ENCODE measurements at regions of chr10 and their contacts with region 1.

Region 1: DNA sequence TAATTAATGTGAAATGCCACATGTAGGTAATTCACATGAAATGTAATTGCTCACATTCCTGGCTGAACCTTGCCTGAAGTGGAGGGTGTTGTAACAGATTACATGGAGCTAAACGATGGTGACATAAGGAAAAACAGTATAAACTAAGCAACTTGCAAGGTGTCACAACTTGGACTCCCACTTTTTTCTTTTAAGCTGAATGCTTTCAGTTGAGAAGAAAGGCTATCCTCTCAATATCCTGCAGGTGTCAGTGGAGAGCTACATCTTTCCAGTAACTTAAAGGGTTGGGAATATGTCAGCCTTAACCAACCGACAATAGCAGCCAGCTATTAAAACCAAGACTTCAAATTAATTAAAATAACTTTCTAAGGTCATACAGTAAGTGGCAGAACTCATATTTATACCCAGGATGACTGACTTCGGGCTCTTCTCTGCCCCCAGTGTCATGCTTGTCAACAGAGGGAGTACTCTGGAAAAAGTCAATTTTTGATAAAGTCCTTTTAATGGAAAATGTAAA is 33.7 kb downstream of the NRBF2 start:
- DNase-seq: peak; percentile 31
- CTCF ChIP-seq: peak; percentile 60

Region 2: DNA sequence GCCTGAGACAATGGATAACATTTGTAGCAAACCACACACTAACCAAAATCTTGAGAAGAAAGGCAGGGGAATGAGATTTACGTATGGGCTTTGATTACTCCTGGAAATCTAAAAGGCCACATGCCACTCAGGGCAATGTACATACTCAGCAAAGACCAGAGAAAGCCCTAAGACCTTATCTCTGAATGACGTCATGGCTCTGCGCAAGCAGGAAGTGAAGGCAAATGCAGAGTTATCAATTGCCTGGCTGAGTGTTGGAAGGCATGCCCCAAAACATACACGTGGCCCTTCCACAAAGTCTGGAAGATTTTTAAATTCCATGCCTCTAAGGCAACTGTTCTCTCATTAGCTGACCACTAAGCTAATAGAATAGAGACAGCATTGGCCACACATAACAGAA is 124.5 kb before region 1 on chr10:
- CTCF ChIA-PET with region 1: no interaction called
- POLR2A ChIA-PET with region 1: no interaction called
- DNase-seq: no peak
- CTCF ChIP-seq: no peak

Region 3: GRCh38 chr10:63068246-63068645 is 98.6 kb before region 1 on chr10:
- CTCF ChIA-PET with region 1: no interaction called
- POLR2A ChIA-PET with region 1: no interaction called
- DNase-seq: no peak
- CTCF ChIP-seq: no peak

Region 4: GRCh38 chr10:63140077-63140476 is 26.7 kb before region 1 on chr10:
- CTCF ChIA-PET with region 1: interaction called, 26 read pairs
- POLR2A ChIA-PET with region 1: no interaction called
- DNase-seq: no peak
- CTCF ChIP-seq: no peak

Region 5: GRCh38 chr10:63192826-63193225 is 26.0 kb after region 1 on chr10:
- CTCF ChIA-PET with region 1: interaction called, 17 read pairs
- POLR2A ChIA-PET with region 1: no interaction called
- DNase-seq: no peak
- CTCF ChIP-seq: no peak

Region 6: DNA sequence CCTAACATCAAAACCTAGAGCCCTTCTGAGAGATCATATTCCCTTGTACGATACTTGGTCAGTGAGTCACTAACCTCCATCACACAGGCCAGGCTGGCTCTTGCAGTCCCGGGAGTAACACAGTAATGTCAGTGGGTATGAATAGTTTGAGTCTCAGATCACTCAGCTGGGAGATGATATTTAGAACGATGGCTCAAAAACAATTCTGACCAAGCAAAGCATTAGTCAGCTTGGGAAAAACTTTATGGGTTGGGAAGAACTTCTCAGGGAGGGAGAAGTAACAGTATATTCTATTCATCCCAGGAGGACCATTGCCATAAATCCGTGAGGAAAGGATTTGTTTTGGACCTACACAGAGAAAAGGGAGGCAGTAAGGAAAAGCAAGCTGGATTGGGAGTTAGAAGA is 533.4 kb after region 1 on chr10:
- CTCF ChIA-PET with region 1: interaction called, 16 read pairs
- POLR2A ChIA-PET with region 1: no interaction called
- DNase-seq: no peak
- CTCF ChIP-seq: no peak

Region 7: GRCh38 chr10:63767138-63767801 is 600.5 kb after region 1 on chr10:
- CTCF ChIA-PET with region 1: interaction called, 30 read pairs
- POLR2A ChIA-PET with region 1: no interaction called
- DNase-seq: no peak
- CTCF ChIP-seq: peak; percentile 35

Region 8: DNA sequence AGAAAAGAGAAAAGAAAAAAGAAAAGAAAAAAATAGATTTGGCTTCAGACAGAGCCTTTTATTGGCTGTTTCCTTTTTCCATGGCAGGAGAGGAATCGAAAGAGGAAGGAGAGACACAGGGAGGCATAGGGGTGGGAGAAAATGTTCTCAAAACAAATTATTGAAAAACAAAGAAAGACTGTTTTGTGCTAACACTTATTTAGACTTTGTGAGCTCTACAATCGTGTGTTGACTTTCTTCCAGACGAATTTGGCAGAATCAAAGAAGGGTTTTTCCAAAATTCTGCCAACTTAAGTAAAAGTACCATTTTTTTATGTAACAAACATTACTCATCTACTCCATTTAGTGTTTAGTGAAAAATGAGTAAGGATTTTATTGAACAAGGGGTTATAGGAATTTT is 1336.6 kb after region 1 on chr10:
- CTCF ChIA-PET with region 1: no interaction called
- POLR2A ChIA-PET with region 1: no interaction called
- DNase-seq: no peak
- CTCF ChIP-seq: no peak